ENCODE measurements at regions of chr6 and their contacts with region 1.

Region 1: DNA sequence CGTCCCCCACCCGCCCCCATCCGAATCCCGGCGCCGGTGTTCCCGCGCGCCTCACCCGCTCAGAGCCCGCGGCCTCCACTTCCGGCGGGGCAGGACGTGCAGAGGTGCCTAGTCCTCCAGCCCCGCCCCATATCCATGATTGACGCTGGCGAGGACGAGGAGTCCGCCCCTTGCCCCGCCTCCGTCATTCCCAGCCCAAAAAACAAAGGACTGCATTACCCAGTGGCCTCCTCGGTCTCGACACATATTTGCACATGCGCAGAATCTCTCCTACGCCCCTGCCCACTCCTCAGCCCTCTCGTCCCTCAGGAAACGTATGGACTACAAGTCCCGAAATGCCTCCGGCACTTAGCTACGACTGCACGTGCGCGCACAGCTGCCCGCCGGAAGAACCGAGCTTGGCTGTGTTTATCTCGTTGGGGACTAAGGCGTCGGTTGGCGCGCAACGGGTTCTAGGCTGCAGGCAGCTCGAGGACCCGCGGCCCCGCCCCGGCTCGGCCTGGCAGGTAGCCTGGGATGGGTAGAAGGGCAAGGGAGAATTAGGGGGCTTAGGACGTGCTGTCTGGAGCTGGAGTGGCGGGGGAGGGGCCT is at the starts of genes KLHDC3 and MEA1:
- DNase-seq: peak; percentile 99 to 100 (median 100)
- H3K4me3 ChIP-seq: peak within 1 kb of the TSS; percentile 58 to 90 (median 81)
- H3K27ac ChIP-seq: peak within 1 kb of the TSS in 58 of 59 donors; percentile 28 to 93 (median 83)
- H3K27me3 ChIP-seq: no peaks in the 10 kb centered on the region
- CTCF ChIP-seq: peak in 13 of 56 donors; percentile 4 to 35 (median 22)
- total RNA-seq, gene KLHDC3: 89.7 to 318 (median 224) TPM
- total RNA-seq, gene MEA1: 35.0 to 82.2 (median 58.5) TPM

Region 2: GRCh38 chr6:42563697-42564505 is 450.0 kb before region 1 on chr6 and contains the start of gene UBR2:
- intact Hi-C with region 1: loop called in 1 of 2 experiments (anchors 10 kb)
- DNase-seq: peak; percentile 90 to 99 (median 98)
- H3K4me3 ChIP-seq: peak within 1 kb of the TSS; percentile 57 to 100 (median 92)
- H3K27ac ChIP-seq: peak within 1 kb of the TSS; percentile 69 to 100 (median 97)
- H3K27me3 ChIP-seq: no peaks in the 10 kb centered on the region
- CTCF ChIP-seq: peak in 55 of 56 donors; percentile 29 to 86 (median 67)
- total RNA-seq, gene UBR2: 29.5 to 56.9 (median 37.2) TPM

Region 3: DNA sequence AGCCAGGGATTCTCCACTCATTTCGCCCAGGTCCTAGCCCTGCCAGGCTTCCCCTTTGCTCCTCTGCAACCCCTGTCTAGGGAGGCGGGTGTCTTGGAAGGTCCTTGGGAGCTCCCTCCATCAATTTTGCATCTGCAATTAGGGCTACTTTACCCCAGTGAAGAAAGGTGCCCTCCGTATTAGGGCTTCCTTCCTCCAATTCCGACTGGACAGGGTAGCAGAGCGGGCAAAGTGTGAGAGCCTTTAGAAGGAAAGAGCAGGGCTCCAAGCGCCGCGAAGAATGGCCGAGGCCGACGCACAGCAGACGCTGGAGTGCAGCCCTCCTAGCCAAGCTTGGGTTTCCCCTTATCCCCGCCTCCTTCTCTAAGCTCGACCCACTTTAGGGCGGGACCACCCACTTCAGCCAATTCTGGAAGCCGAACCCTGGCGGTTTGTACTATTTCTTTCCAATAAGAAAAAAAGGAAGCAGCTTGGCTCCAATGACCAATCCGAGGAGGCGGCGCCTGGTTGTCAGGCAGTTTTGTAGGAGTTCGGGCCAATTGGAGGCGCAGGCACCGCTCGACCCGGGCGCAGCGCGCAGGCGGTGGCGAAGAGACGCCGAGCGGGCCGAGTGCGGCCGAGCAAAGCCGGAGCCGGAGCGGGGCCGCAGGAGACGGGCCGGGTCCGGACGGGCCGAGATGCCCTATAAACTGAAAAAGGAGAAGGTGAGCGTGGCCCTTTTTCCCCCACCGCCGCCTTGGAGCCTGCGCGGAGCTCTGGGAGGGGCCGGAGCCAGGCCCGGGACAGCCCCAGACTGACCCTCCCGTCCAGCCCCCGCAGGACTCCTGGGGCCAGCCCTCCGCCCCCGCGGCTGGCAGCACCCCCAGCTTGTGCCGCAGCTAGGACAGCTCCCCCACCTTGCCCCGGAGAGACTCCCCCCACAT is 29.7 kb before region 1 on chr6 and contains the start of gene PPP2R5D:
- intact Hi-C with region 1: loop called in 1 of 2 experiments (anchors 2 kb)
- DNase-seq: peak; percentile 93 to 99 (median 98)
- H3K4me3 ChIP-seq: peak within 1 kb of the TSS; percentile 65 to 97 (median 90)
- H3K27ac ChIP-seq: peak within 1 kb of the TSS; percentile 47 to 93 (median 85)
- H3K27me3 ChIP-seq: no peaks in the 10 kb centered on the region
- CTCF ChIP-seq: peak in 46 of 56 donors; percentile 2 to 58 (median 34)
- total RNA-seq, gene PPP2R5D: 37.6 to 92.6 (median 66.9) TPM

Region 4: DNA sequence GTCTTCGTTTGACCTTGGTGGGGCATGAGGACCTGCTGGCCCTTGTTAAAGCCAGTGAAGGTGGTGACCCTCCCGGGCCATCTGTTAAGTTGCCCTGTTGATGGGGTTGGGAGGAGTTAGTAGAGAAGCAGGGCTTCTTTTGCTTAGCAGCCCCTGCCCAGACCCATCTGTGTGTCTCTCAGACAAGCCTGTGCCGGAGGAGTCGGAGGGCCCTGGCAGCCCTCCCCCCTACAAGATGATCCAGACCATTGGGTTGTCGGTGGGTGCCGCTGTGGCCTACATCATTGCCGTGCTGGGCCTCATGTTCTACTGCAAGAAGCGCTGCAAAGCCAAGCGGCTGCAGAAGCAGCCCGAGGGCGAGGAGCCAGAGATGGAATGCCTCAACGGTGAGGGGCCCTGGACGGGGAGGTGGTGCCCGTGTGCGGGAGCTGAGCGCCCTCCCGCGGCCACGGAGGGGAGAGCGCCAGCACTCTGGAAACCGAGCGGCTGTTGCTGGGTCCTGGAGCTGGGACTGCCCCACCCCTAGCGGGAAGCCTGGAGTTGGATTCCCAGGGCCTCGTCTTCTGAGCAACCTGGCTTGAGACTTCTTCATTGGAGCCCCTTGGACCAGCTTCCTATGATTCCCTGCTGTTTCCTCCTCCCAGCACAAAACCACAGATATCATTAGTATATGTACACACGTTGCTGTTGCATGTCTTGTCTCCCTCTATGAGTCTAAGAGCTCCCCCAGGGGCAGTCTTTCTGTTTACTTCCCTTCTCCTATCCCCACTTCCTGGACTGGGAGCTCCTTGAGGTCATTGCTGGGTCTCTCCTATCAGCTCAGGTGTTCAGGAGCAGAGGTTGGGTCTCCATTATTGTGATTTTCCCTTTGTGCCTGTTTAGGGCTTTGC is 129.5 kb after region 1 on chr6:
- intact Hi-C with region 1: loop called in 1 of 2 experiments (anchors 5 kb)
- DNase-seq: peak; percentile 73 to 94 (median 84)
- H3K4me3 ChIP-seq: peak overlapping the region in 32 of 59 donors; percentile 0 to 49 (median 24)
- H3K27ac ChIP-seq: peak overlapping the region in 46 of 59 donors; percentile 2 to 79 (median 50)
- H3K27me3 ChIP-seq: no peaks in the 10 kb centered on the region
- CTCF ChIP-seq: peak; percentile 68 to 96 (median 92)

Region 5: DNA sequence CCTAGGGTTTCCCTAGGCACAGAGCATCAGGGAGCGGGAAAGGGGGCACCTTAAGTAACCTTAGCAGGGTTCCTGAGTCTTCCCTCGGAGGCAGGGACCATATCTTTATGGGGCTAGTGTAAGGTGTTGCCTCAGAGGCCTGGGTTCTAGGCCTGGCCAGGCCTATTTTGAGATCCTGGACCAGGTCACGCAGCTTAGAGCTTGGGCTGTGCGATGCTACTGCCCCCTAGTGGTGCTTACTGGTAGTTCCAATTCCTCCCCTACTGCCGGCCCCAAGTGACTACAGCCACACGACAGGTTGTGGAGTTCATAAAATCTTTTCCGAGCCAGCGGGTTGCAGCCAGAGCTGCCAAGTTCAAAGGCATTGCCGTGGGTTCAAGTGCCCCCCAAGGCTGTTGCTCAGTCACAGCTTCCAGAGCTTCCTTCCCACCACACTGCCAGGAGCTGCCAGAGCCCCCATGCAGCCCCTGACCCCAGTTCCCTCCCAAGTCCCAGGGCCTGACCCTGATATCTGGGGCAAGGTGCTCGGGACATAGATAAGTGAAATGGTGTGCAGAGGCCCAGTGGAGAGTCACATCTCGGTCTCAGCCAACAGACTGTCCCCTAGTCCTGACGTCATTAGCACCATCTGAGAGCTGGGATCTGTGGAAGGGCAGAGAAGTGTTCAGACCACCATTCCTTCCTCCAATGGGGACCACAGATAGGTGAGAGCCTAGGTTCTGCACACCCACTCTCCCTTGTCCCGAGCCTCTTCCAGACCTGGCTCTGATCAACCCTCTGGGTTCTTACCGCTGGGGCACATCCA is 492.9 kb after region 1 on chr6:
- intact Hi-C with region 1: loop called in 1 of 2 experiments (anchors 5 kb)
- DNase-seq: peak in 9 of 10 donors; percentile 68 to 85 (median 83)
- H3K4me3 ChIP-seq: peak overlapping the region in 3 of 59 donors; percentile 11 to 16 (median 13)
- H3K27ac ChIP-seq: peak overlapping the region in 51 of 59 donors; percentile 23 to 85 (median 69)
- H3K27me3 ChIP-seq: no peaks in the 10 kb centered on the region
- CTCF ChIP-seq: peak; percentile 85 to 99 (median 96)

Region 6: DNA sequence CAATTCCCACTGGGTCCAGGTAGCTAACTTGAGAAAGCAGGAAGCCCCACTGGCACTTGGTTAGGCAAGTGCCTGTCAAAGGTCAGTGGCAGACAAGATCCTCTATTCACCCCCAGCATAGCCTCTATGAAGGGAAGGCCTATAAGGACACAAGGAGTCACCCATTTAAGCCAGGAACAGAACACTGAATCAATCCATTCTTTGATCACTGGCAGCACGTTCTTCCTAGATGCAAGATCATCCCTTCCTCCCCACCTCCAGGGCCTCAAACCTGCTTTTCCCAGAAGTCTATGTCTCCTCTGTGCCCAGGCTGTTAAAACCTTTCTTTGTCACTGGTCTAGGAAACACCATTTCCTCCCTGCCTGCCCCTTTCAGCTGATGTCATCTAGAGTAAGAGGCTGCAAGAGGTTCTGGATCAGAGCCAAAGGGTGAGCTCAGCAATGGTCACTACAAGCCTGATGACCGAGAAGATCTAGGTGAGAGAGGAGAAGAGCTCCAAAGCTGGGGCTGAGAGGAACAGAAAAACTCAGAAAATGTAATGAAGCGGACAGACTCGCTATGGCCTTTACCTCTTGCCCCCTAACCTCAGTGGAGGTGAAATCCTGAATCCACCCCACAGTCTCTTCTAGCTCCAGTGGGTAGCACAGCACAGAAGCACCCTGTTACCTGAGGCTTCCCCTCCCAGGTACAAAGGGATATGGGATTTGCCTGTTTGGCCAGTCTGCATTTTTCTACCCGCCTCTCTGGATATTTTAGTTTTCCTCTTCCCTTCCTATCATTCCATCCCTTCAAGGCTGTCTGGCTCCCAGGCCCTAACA is 613.3 kb after region 1 on chr6:
- intact Hi-C with region 1: no loop called
- DNase-seq: peak in 3 of 10 donors; percentile 31 to 55 (median 33)
- H3K4me3 ChIP-seq: peak overlapping the region in 18 of 59 donors; percentile 2 to 99 (median 78)
- H3K27ac ChIP-seq: peak overlapping the region in 42 of 59 donors; percentile 1 to 99 (median 48)
- H3K27me3 ChIP-seq: no peaks in the 10 kb centered on the region
- CTCF ChIP-seq: no peak

Measured in dorsolateral prefrontal cortex (tissue), 120 donors.